ENCODE measurements at regions of chr11 and their contacts with region 1.

Region 1: GRCh38 chr11:74267014-74267413 is 44.4 kb downstream of the P4HA3 start:
- DNase-seq: no peak
- ATAC-seq: no peak
- H3K4me3 ChIP-seq: no peak overlapping the region
- H3K27ac ChIP-seq: no peak overlapping the region
- H3K4me1 ChIP-seq: no peaks in the 10 kb centered on the region
- H3K27me3 ChIP-seq: peaks cover 10% of the 10 kb centered on the region; the same call in 1 of the 2 replicates
- CTCF ChIP-seq: no peak

Region 2: GRCh38 chr11:73597956-73598718 is 668.9 kb before region 1 on chr11 and contains the start of gene FAM168A:
- CTCF ChIA-PET with region 1: interaction called, 12 read pairs
- POLR2A ChIA-PET with region 1: no interaction called
- in situ Hi-C with region 1: no loop called
- intact Hi-C with region 1: no loop called
- DNase-seq: peak; percentile 93
- ATAC-seq: peak; percentile 98
- H3K4me3 ChIP-seq: peak within 1 kb of the TSS; percentile 58 to 94
- H3K27ac ChIP-seq: peak within 1 kb of the TSS; percentile 86
- H3K4me1 ChIP-seq: peaks cover 24% of the 10 kb centered on the region
- H3K27me3 ChIP-seq: no peaks in the 10 kb centered on the region
- CTCF ChIP-seq: no peak
- total RNA-seq, gene FAM168A: 62.8 TPM

Region 3: DNA sequence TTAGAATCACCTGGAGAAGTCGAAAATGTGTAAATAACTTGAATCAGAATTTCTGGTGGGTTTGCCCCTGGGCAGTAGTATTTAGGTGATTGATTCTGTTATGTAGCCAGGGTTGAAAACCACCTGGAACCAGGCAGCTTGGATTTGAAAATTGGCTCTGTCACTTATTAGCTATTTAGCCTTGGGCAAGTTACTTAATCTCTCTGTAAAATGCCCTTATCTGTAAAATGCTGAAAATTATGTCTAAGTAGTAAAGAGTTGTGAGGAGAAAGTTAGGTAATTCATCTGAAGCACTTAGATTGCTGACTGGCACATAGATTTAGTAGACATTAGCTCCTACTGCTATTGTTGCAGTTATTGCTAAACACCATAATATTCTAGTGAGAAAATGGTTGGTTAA is 46.6 kb before region 1 on chr11:
- CTCF ChIA-PET with region 1: no interaction called
- POLR2A ChIA-PET with region 1: no interaction called
- in situ Hi-C with region 1: no loop called
- intact Hi-C with region 1: no loop called
- DNase-seq: no peak
- ATAC-seq: no peak
- H3K4me3 ChIP-seq: no peak overlapping the region
- H3K27ac ChIP-seq: no peak overlapping the region
- H3K4me1 ChIP-seq: no peaks in the 10 kb centered on the region
- H3K27me3 ChIP-seq: no peaks in the 10 kb centered on the region
- CTCF ChIP-seq: no peak

Region 4: DNA sequence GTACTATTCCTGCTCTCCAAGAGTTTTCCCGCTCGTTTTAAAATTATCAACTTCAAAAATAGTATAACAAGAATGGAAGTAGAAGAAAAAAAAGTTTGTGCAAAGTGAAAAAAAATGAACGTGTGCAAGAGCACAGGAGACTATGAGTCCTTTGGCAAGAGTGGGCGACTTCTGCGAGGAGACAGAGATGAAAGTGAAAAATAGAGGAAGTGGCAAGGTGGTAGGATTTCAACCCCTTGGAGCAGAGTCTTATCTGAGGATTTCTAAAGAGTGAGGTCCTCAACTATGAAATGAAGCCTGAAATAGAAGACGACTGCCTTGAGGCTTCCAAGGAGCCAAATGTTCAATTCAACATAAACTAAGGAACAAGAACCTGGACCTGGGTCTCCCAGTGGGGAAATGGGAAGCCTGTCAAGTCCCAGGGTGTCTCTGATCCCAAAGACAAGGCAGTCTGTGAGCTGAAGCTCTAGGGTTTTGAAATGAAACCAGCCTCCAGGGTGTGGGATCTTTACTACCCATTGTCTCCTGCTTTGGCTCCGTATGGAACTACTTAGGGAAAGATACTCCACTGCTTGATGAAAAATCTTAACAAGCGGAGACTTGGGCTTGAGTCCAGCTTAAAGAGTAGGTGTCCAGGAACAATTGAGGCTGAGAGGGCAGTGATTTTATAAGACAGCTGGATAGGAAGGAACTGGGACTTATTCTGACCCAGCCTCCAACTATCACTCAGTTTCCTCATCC is 39.6 kb after region 1 on chr11:
- CTCF ChIA-PET with region 1: no interaction called
- POLR2A ChIA-PET with region 1: no interaction called
- in situ Hi-C with region 1: no loop called
- intact Hi-C with region 1: no loop called
- DNase-seq: no peak
- ATAC-seq: no peak
- H3K4me3 ChIP-seq: no peak overlapping the region
- H3K27ac ChIP-seq: no peak overlapping the region
- H3K4me1 ChIP-seq: peaks cover 2% of the 10 kb centered on the region; the same call in 1 of the 2 replicates
- H3K27me3 ChIP-seq: peaks cover 9% of the 10 kb centered on the region; the same call in 1 of the 2 replicates
- CTCF ChIP-seq: no peak